A673 (cell line): ENCODE measurements at regions of chr5 and their contacts with region 1.

Region 1: DNA sequence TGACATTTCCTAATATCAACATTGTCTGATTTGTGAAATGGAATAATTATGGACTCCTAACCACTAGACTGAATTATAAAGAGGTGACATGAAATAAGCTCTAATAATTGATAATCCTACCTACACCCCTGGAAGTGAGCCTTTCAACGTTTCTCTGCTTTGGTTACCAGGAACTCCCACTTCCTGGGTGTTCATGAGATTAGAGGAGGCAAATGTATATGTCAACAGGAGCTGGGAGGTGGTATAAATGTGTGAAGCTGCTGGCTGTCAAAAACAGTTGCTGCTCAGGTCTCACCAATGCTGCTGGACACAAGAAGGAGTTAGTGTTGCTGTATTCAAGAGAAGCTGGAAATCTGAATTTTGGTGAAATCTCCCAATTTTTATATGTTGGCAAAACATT is 96.8 kb downstream of the CAMK4 start:
- DNase-seq: no peak
- H3K4me3 ChIP-seq: no peak overlapping the region
- H3K27ac ChIP-seq: no peak overlapping the region
- H3K4me1 ChIP-seq: no peaks in the 10 kb centered on the region
- H3K27me3 ChIP-seq: no peaks in the 10 kb centered on the region
- CTCF ChIP-seq: no peak

Region 2: GRCh38 chr5:111472579-111472978 is 151.6 kb after region 1 on chr5:
- CTCF ChIA-PET with region 1: no interaction called
- POLR2A ChIA-PET with region 1: interaction called, 11 read pairs
- intact Hi-C with region 1: no loop called
- DNase-seq: no peak
- H3K4me3 ChIP-seq: no peak overlapping the region
- H3K27ac ChIP-seq: no peak overlapping the region
- H3K4me1 ChIP-seq: no peaks in the 10 kb centered on the region
- H3K27me3 ChIP-seq: no peaks in the 10 kb centered on the region
- CTCF ChIP-seq: no peak